ENCODE measurements at regions of chr12 and their contacts with region 1.

Region 1: GRCh38 chr12:52023182-52023975 is 16.6 kb downstream of the TAMALIN start:
- DNase-seq: peak; percentile 74 to 77
- ATAC-seq: peak in 1 of 2 donors; percentile 24
- H3K4me3 ChIP-seq: peak overlapping the region; percentile 64 to 78 (median 74)
- H3K27ac ChIP-seq: peak overlapping the region in 3 of 4 donors; percentile 44 to 58 (median 44)
- H3K4me1 ChIP-seq: peaks cover 36 to 46% of the 10 kb centered on the region in 2 donors
- H3K27me3 ChIP-seq: no peaks in the 10 kb centered on the region
- CTCF ChIP-seq: peak in 4 of 5 experiments; percentile 97 to 99 (median 98)
- POLR2A ChIP-seq: no peak

Region 2: GRCh38 chr12:51980051-51980808 is 43.1 kb before region 1 on chr12:
- in situ Hi-C with region 1: no loop called
- intact Hi-C with region 1: no loop called
- DNase-seq: peak; percentile 49 to 52
- ATAC-seq: peak; percentile 89 to 93
- H3K4me3 ChIP-seq: no peak overlapping the region
- H3K27ac ChIP-seq: no peak overlapping the region
- H3K4me1 ChIP-seq: no peaks in the 10 kb centered on the region
- H3K27me3 ChIP-seq: no peaks in the 10 kb centered on the region
- CTCF ChIP-seq: peak; percentile 90 to 99 (median 92)
- POLR2A ChIP-seq: no peak

Region 3: DNA sequence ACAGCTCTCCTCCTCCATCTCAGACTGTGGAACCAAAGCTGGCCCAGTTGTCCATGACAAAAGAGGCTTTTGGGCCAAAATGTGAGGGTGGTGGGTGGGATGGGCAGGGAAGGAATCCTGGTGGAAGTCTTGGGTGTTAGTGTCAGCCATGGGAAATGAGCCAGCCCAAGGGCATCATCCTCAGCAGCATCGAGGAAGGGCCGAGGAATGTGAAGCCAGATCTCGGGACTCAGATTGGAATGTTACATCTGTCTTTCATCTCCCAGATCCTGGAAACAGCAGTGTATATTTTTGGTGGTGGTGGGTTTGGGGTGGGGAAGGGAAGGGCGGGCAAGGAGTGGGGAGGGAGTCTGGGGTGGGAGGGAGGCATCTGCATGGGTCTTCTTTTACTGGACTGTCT is 28.4 kb before region 1 on chr12:
- in situ Hi-C with region 1: no loop called
- intact Hi-C with region 1: loop called (anchors 1 kb)
- DNase-seq: no peak
- ATAC-seq: no peak
- H3K4me3 ChIP-seq: no peak overlapping the region
- H3K27ac ChIP-seq: no peak overlapping the region
- H3K4me1 ChIP-seq: no peaks in the 10 kb centered on the region
- H3K27me3 ChIP-seq: no peaks in the 10 kb centered on the region
- CTCF ChIP-seq: no peak
- POLR2A ChIP-seq: no peak

Region 4: DNA sequence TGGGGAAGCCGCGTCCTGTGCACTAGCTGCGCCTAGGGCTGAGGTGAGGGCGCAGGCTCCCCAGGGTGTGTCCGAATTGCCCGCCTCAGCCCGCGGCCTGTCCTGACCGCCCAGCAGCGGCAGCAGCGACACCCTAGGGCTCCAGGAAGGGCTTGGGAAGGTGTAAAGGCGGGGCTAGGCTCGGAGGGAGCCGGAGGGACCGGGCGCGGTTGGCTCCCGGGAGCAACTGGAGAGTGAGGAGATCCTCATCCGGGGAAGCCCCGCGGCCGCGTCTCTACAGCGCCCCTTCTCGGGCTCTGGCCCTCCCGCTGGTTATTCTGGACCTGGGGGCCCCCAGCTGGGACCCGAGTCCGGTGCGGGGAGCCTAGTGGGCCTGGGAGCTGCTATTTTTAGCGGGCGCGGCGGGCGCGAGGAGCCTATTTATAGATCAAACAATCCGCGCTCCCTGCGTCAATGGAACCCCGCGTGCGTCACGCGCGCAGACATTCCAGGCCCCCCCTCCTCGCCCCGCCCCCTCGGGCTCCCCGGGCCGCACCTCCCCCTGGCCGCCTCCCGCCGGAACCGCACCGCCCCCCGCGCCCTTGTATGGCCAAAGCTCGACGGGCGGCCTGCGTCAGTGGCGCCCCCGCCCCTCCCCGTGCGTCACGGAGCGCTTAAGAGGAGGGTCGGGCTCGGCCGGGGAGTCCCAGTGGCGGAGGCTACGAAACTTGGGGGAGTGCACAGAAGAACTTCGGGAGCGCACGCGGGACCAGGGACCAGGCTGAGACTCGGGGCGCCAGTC is 27.6 kb after region 1 on chr12 and contains the start of gene NR4A1:
- in situ Hi-C with region 1: no loop called
- intact Hi-C with region 1: loop called (anchors 1 kb)
- DNase-seq: peak; percentile 97 to 98
- ATAC-seq: peak; percentile 71 to 72
- H3K4me3 ChIP-seq: peak within 1 kb of the TSS; percentile 50 to 81 (median 68)
- H3K27ac ChIP-seq: peak within 1 kb of the TSS; percentile 90 to 98 (median 94)
- H3K4me1 ChIP-seq: peaks cover 41 to 47% of the 10 kb centered on the region in 2 donors
- H3K27me3 ChIP-seq: no peaks in the 10 kb centered on the region
- CTCF ChIP-seq: peak in 2 of 5 experiments; percentile 3 to 41
- POLR2A ChIP-seq: peak; percentile 94 to 98
- total RNA-seq, gene NR4A1: 36.3 to 248 (median 90.1) TPM

Region 5: GRCh38 chr12:52061850-52062592 is 38.6 kb after region 1 on chr12:
- in situ Hi-C with region 1: no loop called
- intact Hi-C with region 1: no loop called
- DNase-seq: no peak
- ATAC-seq: no peak
- H3K4me3 ChIP-seq: no peak overlapping the region
- H3K27ac ChIP-seq: peak overlapping the region; percentile 77 to 95 (median 89)
- H3K4me1 ChIP-seq: peaks cover 18 to 35% of the 10 kb centered on the region in 2 donors
- H3K27me3 ChIP-seq: no peaks in the 10 kb centered on the region
- CTCF ChIP-seq: no peak
- POLR2A ChIP-seq: no peak

Region 6: GRCh38 chr12:52082988-52083637 is 59.7 kb after region 1 on chr12:
- in situ Hi-C with region 1: loop called (anchors 5 to 10 kb)
- intact Hi-C with region 1: loop called (anchors 1 kb)
- DNase-seq: peak in 1 of 2 donors; percentile 48
- ATAC-seq: peak; percentile 22 to 32
- H3K4me3 ChIP-seq: no peak overlapping the region
- H3K27ac ChIP-seq: peak overlapping the region; percentile 56 to 77 (median 67)
- H3K4me1 ChIP-seq: peaks cover 52 to 62% of the 10 kb centered on the region in 2 donors
- H3K27me3 ChIP-seq: no peaks in the 10 kb centered on the region
- CTCF ChIP-seq: peak; percentile 94 to 98 (median 96)
- POLR2A ChIP-seq: no peak

Region 7: DNA sequence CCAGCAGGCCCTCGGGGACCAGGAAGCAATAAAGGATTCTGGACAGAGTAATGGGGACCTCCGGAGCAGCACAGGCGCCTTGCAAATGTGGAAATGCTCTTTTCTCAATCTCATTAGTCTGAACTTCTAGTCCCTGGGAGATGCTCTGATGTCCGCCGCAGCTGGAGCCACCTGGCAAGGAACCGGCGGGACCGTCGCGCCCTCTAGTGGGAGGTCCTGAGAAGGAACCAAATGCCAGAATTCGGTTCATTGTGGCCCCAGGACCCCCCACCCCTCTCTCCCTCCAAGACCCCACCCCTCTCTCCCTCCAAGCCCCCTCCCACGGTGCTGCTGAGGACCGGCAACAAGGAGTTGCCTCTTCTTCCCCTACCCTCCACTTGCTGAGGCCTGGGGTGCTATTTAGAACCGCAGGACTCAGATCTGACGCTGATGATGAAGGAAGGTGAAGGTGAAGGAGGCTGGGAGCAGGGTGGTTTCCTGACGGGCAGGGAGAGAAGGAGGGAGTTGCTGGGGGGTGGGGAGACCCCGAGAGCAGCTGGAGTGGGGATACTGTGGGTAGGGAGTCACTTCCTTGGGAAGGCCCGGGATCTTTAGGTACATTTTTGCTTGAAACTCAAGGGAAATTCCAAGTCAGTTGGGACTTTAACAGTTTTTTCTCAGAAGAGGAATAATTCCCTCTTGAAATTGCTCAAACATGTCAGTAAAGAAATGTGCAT is 98.6 kb after region 1 on chr12:
- in situ Hi-C with region 1: no loop called
- intact Hi-C with region 1: loop called (anchors 1 kb)
- DNase-seq: peak; percentile 33 to 42
- ATAC-seq: peak; percentile 18 to 42
- H3K4me3 ChIP-seq: no peak overlapping the region
- H3K27ac ChIP-seq: no peak overlapping the region
- H3K4me1 ChIP-seq: peaks cover 0 to 18% of the 10 kb centered on the region in 2 donors
- H3K27me3 ChIP-seq: no peaks in the 10 kb centered on the region
- CTCF ChIP-seq: peak; percentile 32 to 81 (median 60)
- POLR2A ChIP-seq: no peak